Activated CD4-positive, alpha-beta T cell treated with anti-CD3 and anti-CD28 coated beads, Interleukin-2, amount 10 ng/mL, durations not matched to agents 24 days and 14 days (primary cell): ENCODE measurements at regions of chr4 and their contacts with region 1.

Region 1: GRCh38 chr4:121252224-121252806 is 88.2 kb upstream of the TNIP3 start:
- DNase-seq: peak; percentile 85
- H3K4me3 Mint-ChIP-seq: no peak overlapping the region
- H3K27ac Mint-ChIP-seq: no peak overlapping the region
- H3K4me1 Mint-ChIP-seq: peaks cover 43% of the 10 kb centered on the region
- H3K27me3 Mint-ChIP-seq: no peaks in the 10 kb centered on the region

Region 2: DNA sequence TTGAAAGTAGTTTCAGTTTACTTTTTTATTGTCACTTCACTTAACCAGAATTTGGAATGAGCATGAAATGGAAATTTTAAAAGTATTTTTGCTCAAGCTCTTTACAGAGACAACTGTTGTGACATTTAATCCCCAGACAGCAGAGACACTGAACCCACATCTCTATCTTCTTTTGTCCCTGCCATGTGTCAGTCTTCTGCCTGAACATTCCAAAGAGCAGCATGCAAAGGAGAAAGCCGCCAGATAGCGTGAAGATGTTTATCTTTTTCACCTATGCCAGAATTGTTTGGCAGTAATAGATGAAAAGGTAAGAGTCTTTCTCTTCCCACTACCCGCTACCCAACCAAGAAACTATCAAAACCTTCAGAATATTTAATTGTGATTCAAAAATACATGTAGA is 226.8 kb before region 1 on chr4:
- intact Hi-C with region 1: no loop called
- DNase-seq: no peak
- H3K4me3 Mint-ChIP-seq: no peak overlapping the region
- H3K27ac Mint-ChIP-seq: no peak overlapping the region
- H3K4me1 Mint-ChIP-seq: no peaks in the 10 kb centered on the region
- H3K27me3 Mint-ChIP-seq: peaks cover 16% of the 10 kb centered on the region

Region 3: GRCh38 chr4:121112530-121112929 is 139.8 kb before region 1 on chr4:
- intact Hi-C with region 1: loop called (anchors 2 kb)
- DNase-seq: no peak
- H3K4me3 Mint-ChIP-seq: no peak overlapping the region
- H3K27ac Mint-ChIP-seq: no peak overlapping the region
- H3K4me1 Mint-ChIP-seq: peaks cover 11% of the 10 kb centered on the region
- H3K27me3 Mint-ChIP-seq: peaks cover 31% of the 10 kb centered on the region

Region 4: GRCh38 chr4:121156822-121157769 is 95.2 kb before region 1 on chr4:
- intact Hi-C with region 1: loop called (anchors 1 kb)
- DNase-seq: peak; percentile 75
- H3K4me3 Mint-ChIP-seq: peak overlapping the region; percentile 80
- H3K27ac Mint-ChIP-seq: no peak overlapping the region
- H3K4me1 Mint-ChIP-seq: peaks cover 39% of the 10 kb centered on the region
- H3K27me3 Mint-ChIP-seq: peaks cover 19% of the 10 kb centered on the region

Region 5: DNA sequence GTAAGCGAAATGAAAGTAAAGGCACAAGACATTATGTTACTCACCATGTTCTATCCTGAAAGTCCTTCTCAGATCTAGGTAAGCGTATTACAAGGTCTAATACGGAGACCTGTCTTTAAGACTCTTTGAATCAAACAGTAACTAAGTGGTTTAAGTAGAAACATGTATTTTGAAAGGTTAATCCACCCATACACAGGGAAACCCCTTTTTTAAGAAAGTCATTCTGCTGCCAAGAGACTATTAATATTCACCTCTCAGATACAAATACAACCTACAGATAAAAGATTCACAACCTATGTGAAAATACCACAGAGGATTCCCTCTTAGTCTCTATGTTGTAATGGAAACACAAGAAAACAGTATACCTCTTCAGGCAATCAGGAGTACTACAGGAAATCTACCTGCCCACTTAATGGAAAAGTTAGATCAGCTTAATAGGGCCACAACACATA is 24.9 kb before region 1 on chr4:
- intact Hi-C with region 1: loop called (anchors 1 kb)
- DNase-seq: no peak
- H3K4me3 Mint-ChIP-seq: peak overlapping the region; percentile 63
- H3K27ac Mint-ChIP-seq: peak overlapping the region; percentile 19
- H3K4me1 Mint-ChIP-seq: peaks cover 18% of the 10 kb centered on the region
- H3K27me3 Mint-ChIP-seq: peaks cover 3% of the 10 kb centered on the region

Region 6: DNA sequence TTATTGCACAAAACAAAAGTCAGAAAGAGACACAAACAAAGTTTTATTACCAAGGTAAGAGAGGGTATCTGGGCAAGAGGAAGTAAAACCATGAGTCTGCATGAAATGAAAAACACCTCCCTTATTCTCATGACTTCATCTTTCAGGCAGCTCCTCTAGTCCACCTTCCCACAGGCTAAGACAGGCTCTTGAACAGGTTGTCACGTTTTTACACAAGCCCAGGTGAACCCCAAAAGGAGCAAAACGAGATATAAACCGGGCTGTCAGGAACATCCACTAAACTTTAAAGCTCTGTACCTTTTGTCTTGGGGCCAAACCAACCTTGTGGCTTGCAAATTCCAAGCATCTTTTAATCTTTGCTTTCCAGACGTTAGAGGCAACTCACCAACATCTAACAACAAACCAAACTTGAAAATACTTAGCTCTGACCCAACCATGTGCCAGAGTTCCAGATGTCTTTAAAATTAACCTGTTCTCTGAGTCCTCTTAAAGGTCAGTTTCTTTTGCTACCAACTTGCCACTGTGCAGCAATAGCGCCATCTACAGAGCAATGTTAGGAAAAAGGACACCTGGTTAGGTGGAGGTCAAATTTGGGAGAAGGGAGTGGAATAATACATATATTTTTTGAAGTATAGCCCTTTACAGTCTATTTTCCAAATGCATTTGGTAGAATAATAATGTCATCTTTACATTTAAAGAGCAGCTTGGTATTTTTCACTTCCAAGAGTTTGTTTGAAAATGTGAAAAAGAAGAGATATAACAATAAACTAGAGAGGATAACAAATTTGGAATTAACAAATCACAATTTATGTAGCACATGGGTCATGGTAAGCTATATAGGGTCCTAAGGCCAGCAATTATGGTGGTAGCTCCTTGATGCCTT is 55.4 kb after region 1 on chr4:
- intact Hi-C with region 1: loop called (anchors 1 kb)
- DNase-seq: peak; percentile 84
- H3K4me3 Mint-ChIP-seq: no peak overlapping the region
- H3K27ac Mint-ChIP-seq: no peak overlapping the region
- H3K4me1 Mint-ChIP-seq: peaks cover 13% of the 10 kb centered on the region
- H3K27me3 Mint-ChIP-seq: peaks cover 17% of the 10 kb centered on the region

Region 7: GRCh38 chr4:121800961-121801714 is 548.8 kb after region 1 on chr4 and contains the start of gene EXOSC9:
- intact Hi-C with region 1: loop called (anchors 10 kb)
- DNase-seq: peak; percentile 99
- H3K4me3 Mint-ChIP-seq: peak within 1 kb of the TSS; percentile 83
- H3K27ac Mint-ChIP-seq: peak within 1 kb of the TSS; percentile 96
- H3K4me1 Mint-ChIP-seq: peaks cover 47% of the 10 kb centered on the region
- H3K27me3 Mint-ChIP-seq: peaks cover 3% of the 10 kb centered on the region
- total RNA-seq, gene EXOSC9: 76.9 and 78.8 TPM in 2 replicates